OCI-LY7 (cell line): ENCODE measurements at regions of chr7 and their contacts with region 1.

Region 1: GRCh38 chr7:97104719-97105238 is 12.7 kb upstream of the SDHAF3 start:
- DNase-seq: peak; percentile 67
- H3K4me3 ChIP-seq: no peak overlapping the region
- H3K27ac ChIP-seq: no peak overlapping the region
- H3K4me1 ChIP-seq: no peaks in the 10 kb centered on the region
- CTCF ChIP-seq: peak; percentile 89

Region 2: DNA sequence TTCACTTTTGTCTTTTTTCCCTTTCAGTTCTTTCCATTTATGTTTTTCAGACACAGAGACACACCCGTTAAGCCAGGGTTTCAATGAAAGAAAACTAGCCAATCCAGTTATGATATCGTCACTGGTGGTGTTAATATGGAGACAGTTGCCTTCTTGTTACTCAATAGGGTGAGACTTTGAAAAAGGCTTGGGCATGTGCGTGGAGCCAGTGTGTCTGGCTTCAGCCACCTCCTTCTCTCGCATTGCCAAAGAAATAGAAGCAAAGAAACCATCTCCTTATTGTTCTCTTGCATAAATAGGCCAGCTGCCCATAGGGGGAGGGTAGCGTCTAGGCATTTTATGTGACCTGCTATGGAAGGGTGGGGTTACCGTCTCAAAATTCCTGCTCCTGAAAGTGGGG is 183.5 kb before region 1 on chr7:
- CTCF ChIA-PET with region 1: no interaction called
- POLR2A ChIA-PET with region 1: no interaction called
- intact Hi-C with region 1: no loop called
- DNase-seq: no peak
- H3K4me3 ChIP-seq: no peak overlapping the region
- H3K27ac ChIP-seq: no peak overlapping the region
- H3K4me1 ChIP-seq: no peaks in the 10 kb centered on the region
- CTCF ChIP-seq: no peak

Region 3: GRCh38 chr7:97179454-97180104 is 74.8 kb after region 1 on chr7:
- CTCF ChIA-PET with region 1: no interaction called
- POLR2A ChIA-PET with region 1: no interaction called
- intact Hi-C with region 1: loop called (anchors 1 kb)
- DNase-seq: peak; percentile 66
- H3K4me3 ChIP-seq: no peak overlapping the region
- H3K27ac ChIP-seq: no peak overlapping the region
- H3K4me1 ChIP-seq: no peaks in the 10 kb centered on the region
- CTCF ChIP-seq: peak; percentile 85

Region 4: DNA sequence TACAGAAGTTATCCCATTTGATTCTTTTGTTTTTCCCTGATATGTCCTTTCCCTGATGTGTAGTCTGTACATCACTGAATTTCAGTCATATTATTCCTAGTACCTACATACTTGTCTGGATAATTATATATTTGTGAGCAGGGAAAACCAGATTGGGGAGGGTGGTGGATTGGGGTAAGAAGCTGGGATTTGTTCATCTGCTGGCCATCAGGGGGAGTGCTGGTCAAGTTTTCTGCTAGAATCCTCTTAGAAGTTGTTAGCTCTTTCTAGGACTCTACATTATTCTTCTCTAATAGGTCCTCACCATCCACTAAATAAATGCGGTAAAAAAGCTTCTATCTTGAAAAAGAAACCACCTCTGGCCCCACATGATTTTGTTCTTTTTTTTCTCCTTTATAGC is 394.4 kb after region 1 on chr7:
- CTCF ChIA-PET with region 1: no interaction called
- POLR2A ChIA-PET with region 1: no interaction called
- intact Hi-C with region 1: loop called (anchors 10 kb)
- DNase-seq: peak; percentile 29
- H3K4me3 ChIP-seq: no peak overlapping the region
- H3K27ac ChIP-seq: no peak overlapping the region
- H3K4me1 ChIP-seq: no peaks in the 10 kb centered on the region
- CTCF ChIP-seq: peak; percentile 78

Region 5: GRCh38 chr7:97835296-97836138 is 730.7 kb after region 1 on chr7:
- CTCF ChIA-PET with region 1: no interaction called
- POLR2A ChIA-PET with region 1: no interaction called
- intact Hi-C with region 1: loop called (anchors 1 kb)
- DNase-seq: peak; percentile 71
- H3K4me3 ChIP-seq: no peak overlapping the region
- H3K27ac ChIP-seq: no peak overlapping the region
- H3K4me1 ChIP-seq: no peaks in the 10 kb centered on the region
- CTCF ChIP-seq: peak; percentile 89